Panc1 (cell line): ENCODE measurements at regions of chr1 and their contacts with region 1.

Region 1: DNA sequence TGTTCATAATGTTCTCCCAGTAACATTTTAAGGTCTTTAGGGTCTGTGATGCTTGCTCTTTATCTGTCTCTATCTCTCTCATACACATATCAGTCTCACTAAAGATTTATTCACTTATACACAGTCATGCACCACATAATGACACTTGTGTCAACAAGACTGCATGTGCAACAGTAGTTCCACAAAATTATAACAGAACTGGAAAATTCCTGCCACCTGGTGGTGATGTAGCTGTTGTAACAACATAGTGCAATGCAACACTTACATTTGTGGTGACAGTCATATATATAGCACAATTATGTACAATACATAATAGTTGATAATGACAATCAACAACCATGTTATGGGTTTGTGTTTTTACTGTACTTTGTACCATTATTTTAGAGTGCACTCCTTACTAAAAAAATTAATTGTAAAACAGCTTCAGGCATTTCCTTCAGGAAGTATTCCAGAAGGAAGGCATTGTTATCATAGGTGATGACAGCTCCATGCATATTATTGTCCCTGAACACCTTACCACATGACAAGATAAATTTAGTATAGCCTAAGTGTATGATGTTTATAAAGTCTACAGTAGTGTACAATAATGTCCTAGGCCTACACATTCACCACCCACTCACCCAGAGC is 8.1 kb downstream of the TDRD5 start:
- DNase-seq: no peak
- ATAC-seq: peak; percentile 90
- H3K4me3 ChIP-seq: no peak overlapping the region
- H3K27ac ChIP-seq: no peak overlapping the region
- H3K4me1 ChIP-seq: no peaks in the 10 kb centered on the region
- H3K27me3 ChIP-seq: no peaks in the 10 kb centered on the region
- CTCF ChIP-seq: peak; percentile 55; the same call in 1 of the 2 replicates

Region 2: DNA sequence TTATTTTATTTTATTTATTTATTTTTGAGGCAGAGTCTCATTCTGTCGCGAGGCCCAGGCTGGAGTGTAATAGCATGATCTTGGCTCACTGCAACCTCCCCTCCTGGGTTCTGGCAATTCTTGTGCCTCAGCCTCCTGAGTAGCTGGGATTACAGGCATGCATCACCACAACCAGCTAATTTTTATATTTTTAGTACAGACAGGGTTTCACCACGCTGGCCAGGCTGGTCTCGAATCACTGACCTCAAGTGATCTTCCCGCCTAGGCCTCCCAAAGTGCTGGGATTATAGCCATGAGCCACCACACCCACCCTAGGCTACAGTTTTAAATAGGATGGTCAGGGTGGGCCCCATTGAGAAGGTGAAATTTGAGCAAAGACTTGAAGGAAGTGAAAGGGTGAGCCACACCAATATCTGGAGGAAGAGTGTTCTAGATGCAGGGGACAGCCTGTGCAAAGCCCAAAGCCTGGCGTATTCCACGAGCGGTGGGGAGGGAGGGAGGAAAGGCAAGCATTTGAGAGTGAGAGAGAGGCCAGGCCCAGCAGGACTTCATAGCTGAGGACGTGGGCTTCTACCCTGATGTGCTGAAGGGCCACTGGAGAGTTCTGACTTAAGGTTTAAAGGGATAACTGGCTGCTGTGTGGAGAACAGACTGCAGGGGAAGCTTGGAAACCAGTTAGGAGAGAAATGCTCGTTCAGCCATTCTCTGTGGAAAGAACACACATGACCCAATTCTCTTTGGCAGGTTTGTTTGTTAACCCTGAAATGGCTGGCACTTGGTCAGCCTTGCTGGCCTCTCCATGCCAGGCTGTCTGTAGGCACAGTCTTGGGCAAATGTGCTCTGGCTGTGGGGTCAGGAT is 636.7 kb before region 1 on chr1:
- CTCF ChIA-PET with region 1: no interaction called
- POLR2A ChIA-PET with region 1: no interaction called
- in situ Hi-C with region 1: no loop called
- intact Hi-C with region 1: no loop called
- DNase-seq: no peak
- ATAC-seq: no peak
- H3K4me3 ChIP-seq: no peak overlapping the region
- H3K27ac ChIP-seq: no peak overlapping the region
- H3K4me1 ChIP-seq: no peaks in the 10 kb centered on the region
- H3K27me3 ChIP-seq: no peaks in the 10 kb centered on the region
- CTCF ChIP-seq: no peak

Region 3: GRCh38 chr1:179251675-179252074 is 348.1 kb before region 1 on chr1:
- CTCF ChIA-PET with region 1: interaction called, 3 read pairs
- POLR2A ChIA-PET with region 1: no interaction called
- in situ Hi-C with region 1: no loop called
- intact Hi-C with region 1: loop called (anchors 10 kb)
- DNase-seq: peak; percentile 38
- ATAC-seq: peak; percentile 85; the same call in 1 of the 2 replicates
- H3K4me3 ChIP-seq: no peak overlapping the region
- H3K27ac ChIP-seq: no peak overlapping the region
- H3K4me1 ChIP-seq: no peaks in the 10 kb centered on the region
- H3K27me3 ChIP-seq: no peaks in the 10 kb centered on the region
- CTCF ChIP-seq: no peak; the same call in 1 of the 2 replicates

Region 4: DNA sequence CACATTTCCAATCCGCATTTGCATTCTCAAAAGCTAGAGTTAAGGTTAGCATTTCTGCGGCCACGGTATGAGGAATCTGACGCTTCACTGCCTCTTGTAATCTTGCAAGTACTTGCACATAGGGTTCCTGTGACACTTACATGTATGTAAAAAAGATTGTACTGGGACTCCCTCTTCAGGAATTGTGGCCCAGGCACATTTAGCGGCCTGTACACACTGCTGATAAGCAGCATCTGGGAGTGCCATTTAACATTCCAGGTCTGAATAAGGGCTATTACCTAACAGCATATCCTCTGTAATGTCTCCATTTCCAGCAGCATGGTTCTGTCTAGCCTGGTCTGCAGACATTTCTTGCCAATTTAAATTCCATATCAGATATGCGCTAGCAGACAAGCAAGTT is 158.2 kb before region 1 on chr1:
- CTCF ChIA-PET with region 1: interaction called, 13 read pairs
- POLR2A ChIA-PET with region 1: no interaction called
- in situ Hi-C with region 1: no loop called
- intact Hi-C with region 1: no loop called
- DNase-seq: no peak
- ATAC-seq: no peak
- H3K4me3 ChIP-seq: no peak overlapping the region
- H3K27ac ChIP-seq: no peak overlapping the region
- H3K4me1 ChIP-seq: no peaks in the 10 kb centered on the region
- H3K27me3 ChIP-seq: no peaks in the 10 kb centered on the region; the same call in 1 of the 2 replicates
- CTCF ChIP-seq: no peak

Region 5: GRCh38 chr1:179516976-179517705 is 82.6 kb before region 1 on chr1:
- CTCF ChIA-PET with region 1: no interaction called
- POLR2A ChIA-PET with region 1: no interaction called
- in situ Hi-C with region 1: no loop called
- intact Hi-C with region 1: no loop called
- DNase-seq: no peak
- ATAC-seq: no peak
- H3K4me3 ChIP-seq: no peak overlapping the region
- H3K27ac ChIP-seq: no peak overlapping the region
- H3K4me1 ChIP-seq: no peaks in the 10 kb centered on the region
- H3K27me3 ChIP-seq: peaks cover 2% of the 10 kb centered on the region; the same call in 1 of the 2 replicates
- CTCF ChIP-seq: no peak

Region 6: GRCh38 chr1:179632868-179633267 is 33.1 kb after region 1 on chr1:
- CTCF ChIA-PET with region 1: no interaction called
- POLR2A ChIA-PET with region 1: interaction called, 16 read pairs
- in situ Hi-C with region 1: no loop called
- intact Hi-C with region 1: no loop called
- DNase-seq: no peak
- ATAC-seq: no peak
- H3K4me3 ChIP-seq: no peak overlapping the region
- H3K27ac ChIP-seq: no peak overlapping the region
- H3K4me1 ChIP-seq: no peaks in the 10 kb centered on the region
- H3K27me3 ChIP-seq: 0 out of 2 replicates have a peak, but pooled peaks cover 2% of the 10 kb centered on the region
- CTCF ChIP-seq: no peak

Region 7: GRCh38 chr1:179677898-179678297 is 78.2 kb after region 1 on chr1:
- CTCF ChIA-PET with region 1: no interaction called
- POLR2A ChIA-PET with region 1: no interaction called
- in situ Hi-C with region 1: no loop called
- intact Hi-C with region 1: no loop called
- DNase-seq: no peak
- ATAC-seq: no peak
- H3K4me3 ChIP-seq: no peak overlapping the region
- H3K27ac ChIP-seq: no peak overlapping the region
- H3K4me1 ChIP-seq: no peaks in the 10 kb centered on the region
- H3K27me3 ChIP-seq: no peaks in the 10 kb centered on the region
- CTCF ChIP-seq: no peak